MCF 10A (cell line): ENCODE measurements at regions of chr5 and their contacts with region 1.

Region 1: DNA sequence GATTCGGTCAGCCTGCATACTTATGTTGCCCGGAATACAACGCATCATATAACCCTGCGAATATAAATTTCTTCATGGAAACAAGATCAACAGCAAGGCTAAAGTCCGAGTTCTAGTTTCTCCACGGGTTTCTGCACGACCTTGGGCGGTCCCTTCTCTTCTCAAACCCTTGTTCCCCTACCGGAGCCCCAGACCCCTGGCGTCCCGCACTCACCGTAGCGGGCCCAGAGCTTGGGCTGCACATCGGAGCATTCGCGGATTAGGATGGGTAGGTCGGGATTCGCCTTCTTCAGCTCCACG is 438 bp downstream of the NDUFA2 start:
- DNase-seq: no peak
- H3K4me3 Mint-ChIP-seq: peak overlapping the region; percentile 86
- H3K27ac Mint-ChIP-seq: peak overlapping the region; percentile 93
- H3K4me1 Mint-ChIP-seq: peaks cover 18% of the 10 kb centered on the region
- H3K27me3 Mint-ChIP-seq: no peaks in the 10 kb centered on the region
- CTCF ChIP-seq: no peak

Region 2: DNA sequence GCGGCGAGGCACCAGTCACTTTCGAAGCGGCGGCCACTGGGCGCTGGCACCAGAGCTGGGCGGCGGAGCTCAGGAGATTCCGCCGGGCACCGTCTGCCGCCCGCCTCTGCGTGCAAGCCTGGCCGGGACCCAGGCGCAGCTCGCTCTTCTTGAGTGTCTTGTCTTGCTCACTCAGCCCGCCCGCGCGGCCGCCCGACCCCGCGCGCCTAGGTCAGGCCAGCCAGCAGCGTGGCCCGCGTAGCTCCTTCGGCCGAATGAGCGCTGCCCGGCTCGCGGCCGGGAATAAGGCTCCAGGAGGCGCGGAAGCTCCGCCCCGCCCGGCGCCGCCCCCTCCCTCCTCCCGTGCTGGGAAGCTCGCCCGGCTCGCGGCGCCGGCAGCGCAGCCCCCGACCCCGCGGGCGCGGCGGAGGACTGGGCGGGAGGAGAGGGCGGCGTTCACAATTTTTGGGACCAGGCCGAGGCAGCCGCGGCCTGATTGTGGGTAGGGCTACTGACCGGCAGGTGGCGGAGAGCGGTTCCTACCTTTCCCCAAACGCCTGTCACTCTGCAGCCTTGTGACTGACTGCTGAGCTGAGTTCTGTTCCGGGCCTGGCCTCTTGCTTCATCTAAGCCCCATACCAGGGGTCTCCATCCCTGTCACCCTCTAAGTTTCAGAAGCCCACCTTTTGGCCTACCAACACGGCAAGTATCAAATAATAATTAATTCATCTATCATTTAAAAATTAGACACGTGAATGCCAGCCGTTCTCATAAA is 300.5 kb before region 1 on chr5 and contains the start of gene HBEGF:
- CTCF ChIA-PET with region 1: interaction called, 7 read pairs
- POLR2A ChIA-PET with region 1: interaction called, 16 read pairs
- intact Hi-C with region 1: no loop called
- DNase-seq: peak; percentile 94
- H3K4me3 Mint-ChIP-seq: peak within 1 kb of the TSS; percentile 78
- H3K27ac Mint-ChIP-seq: peak within 1 kb of the TSS; percentile 54
- H3K4me1 Mint-ChIP-seq: peaks cover 47% of the 10 kb centered on the region
- H3K27me3 Mint-ChIP-seq: no peaks in the 10 kb centered on the region
- CTCF ChIP-seq: peak; percentile 62
- total RNA-seq, gene HBEGF: 20.6 and 55.7 TPM in 2 replicates

Region 3: DNA sequence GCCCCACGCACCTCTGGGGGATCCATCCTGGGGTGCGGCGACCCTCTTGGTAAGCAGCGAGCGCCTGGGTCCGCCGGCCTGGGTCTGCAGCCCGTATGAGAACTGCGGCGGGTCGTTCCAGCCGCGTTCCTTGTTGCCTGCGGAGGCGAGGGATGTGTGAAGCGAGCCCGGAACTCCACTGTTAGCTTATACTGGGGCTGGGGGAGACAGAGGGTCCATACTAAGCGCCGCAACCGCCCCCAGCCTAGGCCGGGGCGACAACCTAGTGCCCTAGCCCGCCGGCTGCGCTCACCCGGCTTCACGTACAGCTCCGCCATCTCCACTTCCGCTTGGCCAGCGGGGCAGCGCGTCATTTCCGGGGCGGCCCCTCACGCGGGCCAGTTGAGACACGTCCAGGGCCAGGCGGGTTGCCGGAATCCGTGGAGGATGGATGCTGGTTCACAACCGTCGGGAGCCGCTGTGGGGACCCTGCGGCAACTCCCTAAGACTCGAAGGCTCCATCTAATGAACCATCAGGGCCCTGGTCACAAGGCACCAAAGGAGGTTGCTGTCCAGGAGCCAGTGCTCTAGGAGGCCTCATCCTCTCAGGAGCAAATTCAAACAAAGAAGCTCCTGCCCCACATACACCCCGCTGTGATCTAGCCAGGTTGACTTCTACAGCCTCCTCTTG is 89.7 kb before region 1 on chr5 and contains the start of gene SRA1:
- CTCF ChIA-PET with region 1: interaction called, 5 read pairs
- POLR2A ChIA-PET with region 1: interaction called, 89 read pairs
- intact Hi-C with region 1: no loop called
- DNase-seq: peak; percentile 96
- H3K4me3 Mint-ChIP-seq: peak within 1 kb of the TSS; percentile 87
- H3K27ac Mint-ChIP-seq: peak within 1 kb of the TSS; percentile 91
- H3K4me1 Mint-ChIP-seq: peaks cover 38% of the 10 kb centered on the region
- H3K27me3 Mint-ChIP-seq: no peaks in the 10 kb centered on the region
- CTCF ChIP-seq: no peak
- total RNA-seq, gene SRA1: 105 and 107 TPM in 2 replicates

Region 4: DNA sequence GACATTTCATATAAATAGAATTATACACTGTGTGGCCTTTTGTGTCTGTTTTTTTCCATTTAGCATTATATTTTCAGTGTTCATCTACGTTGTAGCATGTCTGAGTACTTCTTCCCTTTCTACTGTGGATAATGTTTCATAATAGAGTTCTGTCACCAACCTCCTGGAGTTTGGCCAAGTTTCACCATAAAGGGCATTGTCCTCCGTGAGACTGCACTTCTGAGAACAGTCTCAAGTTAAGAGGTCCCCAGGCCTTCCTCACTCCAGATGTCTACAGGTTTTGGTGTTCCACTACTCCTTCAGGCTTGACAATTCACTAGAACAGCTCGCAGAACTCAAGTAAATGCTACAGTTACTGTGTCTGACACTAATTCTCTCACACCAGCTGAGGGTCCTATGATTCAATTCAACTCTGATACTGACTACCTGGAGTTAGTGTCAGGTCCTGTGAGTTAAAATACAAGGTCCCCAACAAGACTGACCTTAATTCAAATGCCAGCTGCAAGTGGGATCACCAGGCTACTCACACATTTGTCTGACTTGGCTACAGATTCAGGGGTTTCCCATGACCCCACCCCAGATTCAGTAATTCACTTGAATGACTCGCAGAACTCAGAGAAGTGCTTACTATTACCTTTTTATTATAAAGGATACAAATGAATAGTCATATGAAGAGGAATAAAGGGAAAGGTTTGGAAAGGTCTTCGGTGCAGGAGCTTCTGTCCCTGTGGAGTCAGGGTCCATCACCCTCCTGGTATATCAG is 51.3 kb before region 1 on chr5:
- CTCF ChIA-PET with region 1: interaction called, 4 read pairs
- POLR2A ChIA-PET with region 1: interaction called, 11 read pairs
- intact Hi-C with region 1: no loop called
- DNase-seq: peak; percentile 84
- H3K4me3 Mint-ChIP-seq: no peak overlapping the region
- H3K27ac Mint-ChIP-seq: no peak overlapping the region
- H3K4me1 Mint-ChIP-seq: peaks cover 21% of the 10 kb centered on the region
- H3K27me3 Mint-ChIP-seq: no peaks in the 10 kb centered on the region
- CTCF ChIP-seq: no peak

Region 5: GRCh38 chr5:140658870-140659269 is 11.9 kb after region 1 on chr5:
- CTCF ChIA-PET with region 1: interaction called, 3 read pairs
- POLR2A ChIA-PET with region 1: interaction called, 164 read pairs
- intact Hi-C with region 1: no loop called
- DNase-seq: no peak
- H3K4me3 Mint-ChIP-seq: no peak overlapping the region
- H3K27ac Mint-ChIP-seq: no peak overlapping the region
- H3K4me1 Mint-ChIP-seq: peaks cover 7% of the 10 kb centered on the region
- H3K27me3 Mint-ChIP-seq: no peaks in the 10 kb centered on the region
- CTCF ChIP-seq: no peak

Region 6: GRCh38 chr5:140700177-140701144 is 53.5 kb after region 1 on chr5 and contains the start of gene ZMAT2:
- CTCF ChIA-PET with region 1: interaction called, 3 read pairs
- POLR2A ChIA-PET with region 1: interaction called, 39 read pairs
- intact Hi-C with region 1: no loop called
- DNase-seq: peak; percentile 100
- H3K4me3 Mint-ChIP-seq: peak within 1 kb of the TSS; percentile 87
- H3K27ac Mint-ChIP-seq: peak within 1 kb of the TSS; percentile 98
- H3K4me1 Mint-ChIP-seq: peaks cover 13% of the 10 kb centered on the region
- H3K27me3 Mint-ChIP-seq: no peaks in the 10 kb centered on the region
- CTCF ChIP-seq: no peak
- total RNA-seq, gene ZMAT2: 54.9 and 70.4 TPM in 2 replicates

Region 7: DNA sequence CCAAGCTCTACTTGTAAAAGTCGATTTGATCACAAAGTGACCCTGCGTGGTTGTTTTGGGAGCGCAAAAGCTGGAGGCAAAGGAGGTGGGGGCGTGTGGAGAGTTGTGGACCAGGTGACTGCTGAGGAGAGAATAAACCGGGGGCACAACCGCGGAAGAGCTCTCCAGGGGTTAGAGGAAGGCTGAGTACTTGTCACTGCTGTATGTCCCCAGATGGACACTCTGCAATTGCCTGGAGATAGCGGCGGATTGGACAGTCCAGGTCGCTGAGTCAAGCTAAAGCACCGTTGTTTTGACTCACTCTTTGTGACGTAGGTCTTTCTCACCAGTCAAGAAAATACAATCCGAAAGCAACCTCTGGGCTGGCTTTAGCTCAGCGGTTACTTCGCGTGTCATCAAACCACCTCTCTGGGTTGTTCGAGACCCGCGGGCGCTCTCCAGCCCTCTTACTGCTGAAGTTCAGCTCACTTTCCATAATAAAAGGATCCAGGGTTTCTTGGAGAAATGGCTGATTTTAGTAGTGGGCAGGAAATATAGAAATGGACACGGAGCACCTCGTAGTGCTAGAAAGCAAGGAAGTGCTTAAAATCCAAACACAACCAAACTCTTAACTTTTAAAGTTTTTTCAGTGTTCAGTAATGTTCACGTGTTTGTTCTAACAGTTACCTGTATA is 78.9 kb after region 1 on chr5:
- CTCF ChIA-PET with region 1: interaction called, 4 read pairs
- POLR2A ChIA-PET with region 1: interaction called, 13 read pairs
- intact Hi-C with region 1: no loop called
- DNase-seq: peak; percentile 99
- H3K4me3 Mint-ChIP-seq: peak overlapping the region; percentile 72
- H3K27ac Mint-ChIP-seq: peak overlapping the region; percentile 42
- H3K4me1 Mint-ChIP-seq: peaks cover 6% of the 10 kb centered on the region
- H3K27me3 Mint-ChIP-seq: no peaks in the 10 kb centered on the region
- CTCF ChIP-seq: no peak

Region 8: GRCh38 chr5:140916349-140916748 is 269.4 kb after region 1 on chr5:
- CTCF ChIA-PET with region 1: no interaction called
- POLR2A ChIA-PET with region 1: no interaction called
- intact Hi-C with region 1: no loop called
- DNase-seq: no peak
- H3K4me3 Mint-ChIP-seq: no peak overlapping the region
- H3K27ac Mint-ChIP-seq: no peak overlapping the region
- H3K4me1 Mint-ChIP-seq: no peaks in the 10 kb centered on the region
- H3K27me3 Mint-ChIP-seq: no peaks in the 10 kb centered on the region
- CTCF ChIP-seq: no peak